HepG2 (cell line): ENCODE measurements at regions of chr6 and their contacts with region 1.

Region 1: GRCh38 chr6:52325695-52326441 is 36.1 kb upstream of the PAQR8 start:
- DNase-seq: peak; percentile 98
- ATAC-seq: peak; percentile 93
- H3K4me3 ChIP-seq: peak overlapping the region; percentile 10 to 48 (median 24)
- H3K27ac ChIP-seq: peak overlapping the region; percentile 93
- H3K4me1 ChIP-seq: peaks cover 72% of the 10 kb centered on the region
- H3K27me3 ChIP-seq: no peaks in the 10 kb centered on the region
- CTCF ChIP-seq: no peak
- EP300 ChIP-seq: peak; percentile 30 to 89; a peak in 2 of 4 replicates
- POLR2A ChIP-seq: peak; percentile 37 to 49; a peak in 3 of 4 replicates
- RAD21 ChIP-seq: peak; percentile 35

Region 2: DNA sequence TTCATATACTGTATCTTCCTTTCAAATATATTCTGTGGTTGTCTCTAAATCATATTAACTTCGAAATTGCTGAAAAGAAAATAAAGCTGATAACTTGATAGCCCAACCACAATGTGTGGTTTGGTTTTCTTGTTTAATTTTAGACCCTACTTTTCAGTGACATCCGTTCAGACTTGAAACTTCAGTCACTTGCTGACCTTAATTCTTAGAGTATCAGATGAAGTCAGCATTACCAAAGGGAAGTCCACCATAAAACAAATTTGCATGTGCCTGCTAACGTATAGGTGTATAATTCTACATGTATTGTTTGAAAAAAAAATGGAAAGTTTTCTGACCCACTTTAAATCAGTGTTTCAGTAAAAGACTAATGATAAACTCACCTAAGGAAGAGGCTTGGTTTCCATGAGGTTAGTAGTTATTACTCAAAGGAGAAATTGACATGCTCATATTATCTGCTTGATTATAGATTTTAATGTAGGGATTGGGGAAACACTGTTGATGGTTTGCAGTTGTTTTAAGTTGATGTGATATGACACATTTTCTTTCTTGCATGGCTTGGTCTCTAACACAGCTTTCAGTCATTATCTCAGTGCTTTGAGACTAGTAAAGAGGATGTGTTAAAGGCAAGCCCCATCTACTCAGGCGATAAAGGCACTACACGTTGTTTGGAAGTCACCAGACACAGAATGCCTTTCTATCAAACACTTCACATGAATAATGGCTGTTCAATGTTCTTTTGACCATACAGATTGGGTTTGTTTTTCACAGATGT is 144.9 kb before region 1 on chr6:
- CTCF ChIA-PET with region 1: no interaction called
- POLR2A ChIA-PET with region 1: no interaction called
- in situ Hi-C with region 1: no loop called
- intact Hi-C with region 1: no loop called
- DNase-seq: no peak
- ATAC-seq: no peak
- H3K4me3 ChIP-seq: no peak overlapping the region
- H3K27ac ChIP-seq: no peak overlapping the region
- H3K4me1 ChIP-seq: no peaks in the 10 kb centered on the region
- H3K27me3 ChIP-seq: no peaks in the 10 kb centered on the region
- CTCF ChIP-seq: no peak
- EP300 ChIP-seq: no peak
- POLR2A ChIP-seq: no peak
- RAD21 ChIP-seq: no peak

Region 3: GRCh38 chr6:52271852-52272460 is 53.9 kb before region 1 on chr6:
- CTCF ChIA-PET with region 1: no interaction called
- POLR2A ChIA-PET with region 1: no interaction called
- in situ Hi-C with region 1: no loop called
- intact Hi-C with region 1: no loop called
- DNase-seq: peak; percentile 43
- ATAC-seq: peak; percentile 13; the same call in 2 of the 3 replicates
- H3K4me3 ChIP-seq: no peak overlapping the region
- H3K27ac ChIP-seq: no peak overlapping the region
- H3K4me1 ChIP-seq: peaks cover 20% of the 10 kb centered on the region
- H3K27me3 ChIP-seq: no peaks in the 10 kb centered on the region
- CTCF ChIP-seq: no peak
- EP300 ChIP-seq: peak in 1 of 2 experiments; percentile 57; a peak in 1 of 4 replicates
- POLR2A ChIP-seq: no peak
- RAD21 ChIP-seq: no peak

Region 4: GRCh38 chr6:52304983-52305390 is 20.9 kb before region 1 on chr6:
- CTCF ChIA-PET with region 1: no interaction called
- POLR2A ChIA-PET with region 1: interaction called, 16 read pairs
- in situ Hi-C with region 1: no loop called
- intact Hi-C with region 1: loop called (anchors 2 kb)
- DNase-seq: no peak
- ATAC-seq: no peak
- H3K4me3 ChIP-seq: no peak overlapping the region
- H3K27ac ChIP-seq: peak overlapping the region; percentile 82
- H3K4me1 ChIP-seq: peaks cover 71% of the 10 kb centered on the region
- H3K27me3 ChIP-seq: no peaks in the 10 kb centered on the region
- CTCF ChIP-seq: no peak
- EP300 ChIP-seq: no peak
- POLR2A ChIP-seq: no peak
- RAD21 ChIP-seq: no peak

Region 5: GRCh38 chr6:52337633-52338290 is 11.9 kb after region 1 on chr6:
- CTCF ChIA-PET with region 1: no interaction called
- POLR2A ChIA-PET with region 1: interaction called, 10 read pairs
- in situ Hi-C with region 1: no loop called
- intact Hi-C with region 1: no loop called
- DNase-seq: no peak
- ATAC-seq: no peak
- H3K4me3 ChIP-seq: no peak overlapping the region
- H3K27ac ChIP-seq: no peak overlapping the region
- H3K4me1 ChIP-seq: peaks cover 45% of the 10 kb centered on the region
- H3K27me3 ChIP-seq: no peaks in the 10 kb centered on the region
- CTCF ChIP-seq: no peak
- EP300 ChIP-seq: no peak
- POLR2A ChIP-seq: no peak
- RAD21 ChIP-seq: no peak

Region 6: DNA sequence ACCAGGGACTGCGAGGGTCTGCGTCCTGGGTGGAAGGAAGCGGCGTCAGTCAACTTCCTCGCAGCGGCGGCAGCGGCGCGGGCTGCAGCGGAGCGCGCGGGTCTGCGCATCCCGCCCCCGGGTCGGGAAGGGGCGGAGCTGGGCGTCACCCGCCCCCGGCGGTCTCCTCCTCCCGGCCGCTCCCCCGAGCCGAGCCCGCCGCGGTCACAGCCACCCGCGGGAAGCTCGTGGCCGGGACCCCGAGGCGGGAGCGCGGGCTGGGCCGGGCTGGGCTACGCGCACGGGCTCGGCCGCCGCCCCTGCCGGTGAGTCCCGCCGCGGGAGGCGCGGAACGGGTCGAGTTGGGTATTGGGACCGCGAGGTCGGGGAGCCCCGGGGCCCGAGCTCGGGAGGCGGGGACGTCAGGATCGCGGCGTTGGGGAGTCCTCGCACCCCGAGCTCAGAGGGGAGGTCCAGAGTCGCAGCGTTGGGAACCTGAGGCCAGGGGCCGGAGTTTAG is 36.1 kb after region 1 on chr6 and contains the start of gene PAQR8:
- CTCF ChIA-PET with region 1: no interaction called
- POLR2A ChIA-PET with region 1: interaction called, 22 read pairs
- in situ Hi-C with region 1: no loop called
- intact Hi-C with region 1: no loop called
- DNase-seq: no peak
- ATAC-seq: peak; percentile 89
- H3K4me3 ChIP-seq: peak within 1 kb of the TSS; percentile 79 to 100 (median 95)
- H3K27ac ChIP-seq: peak within 1 kb of the TSS; percentile 60
- H3K4me1 ChIP-seq: peaks cover 62% of the 10 kb centered on the region
- H3K27me3 ChIP-seq: no peaks in the 10 kb centered on the region; a peak in 1 of 5 replicates
- CTCF ChIP-seq: no peak
- EP300 ChIP-seq: no peak; a peak in 1 of 4 replicates
- POLR2A ChIP-seq: peak in 1 of 2 experiments; percentile 73; a peak in 2 of 4 replicates
- RAD21 ChIP-seq: peak; percentile 69
- total RNA-seq, gene PAQR8: 26.2 and 37.7 TPM in 2 replicates

Region 7: DNA sequence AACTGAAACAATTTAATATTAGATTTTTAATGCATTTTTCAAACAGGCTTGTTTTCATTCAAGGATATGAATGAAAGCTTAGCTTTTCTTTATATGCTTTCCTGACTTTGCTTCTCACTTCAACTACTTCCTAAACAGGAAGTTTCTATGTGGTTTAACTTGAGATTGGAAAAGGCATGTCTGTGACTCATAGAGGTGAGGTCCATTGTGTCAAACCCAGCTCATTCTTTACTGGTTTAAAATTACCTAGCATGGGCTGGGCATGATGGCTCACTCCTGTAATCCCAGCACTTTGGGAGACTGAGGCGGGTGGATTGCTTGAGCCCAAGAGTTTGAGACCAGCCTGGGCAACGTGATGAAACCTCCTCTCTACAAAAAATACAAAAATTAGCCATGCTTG is 128.7 kb after region 1 on chr6:
- CTCF ChIA-PET with region 1: no interaction called
- POLR2A ChIA-PET with region 1: no interaction called
- in situ Hi-C with region 1: no loop called
- intact Hi-C with region 1: no loop called
- DNase-seq: peak; percentile 6
- ATAC-seq: no peak
- H3K4me3 ChIP-seq: no peak overlapping the region
- H3K27ac ChIP-seq: no peak overlapping the region
- H3K4me1 ChIP-seq: no peaks in the 10 kb centered on the region; the same call in 1 of the 2 replicates
- H3K27me3 ChIP-seq: no peaks in the 10 kb centered on the region
- CTCF ChIP-seq: no peak
- EP300 ChIP-seq: no peak
- POLR2A ChIP-seq: no peak
- RAD21 ChIP-seq: no peak

Region 8: DNA sequence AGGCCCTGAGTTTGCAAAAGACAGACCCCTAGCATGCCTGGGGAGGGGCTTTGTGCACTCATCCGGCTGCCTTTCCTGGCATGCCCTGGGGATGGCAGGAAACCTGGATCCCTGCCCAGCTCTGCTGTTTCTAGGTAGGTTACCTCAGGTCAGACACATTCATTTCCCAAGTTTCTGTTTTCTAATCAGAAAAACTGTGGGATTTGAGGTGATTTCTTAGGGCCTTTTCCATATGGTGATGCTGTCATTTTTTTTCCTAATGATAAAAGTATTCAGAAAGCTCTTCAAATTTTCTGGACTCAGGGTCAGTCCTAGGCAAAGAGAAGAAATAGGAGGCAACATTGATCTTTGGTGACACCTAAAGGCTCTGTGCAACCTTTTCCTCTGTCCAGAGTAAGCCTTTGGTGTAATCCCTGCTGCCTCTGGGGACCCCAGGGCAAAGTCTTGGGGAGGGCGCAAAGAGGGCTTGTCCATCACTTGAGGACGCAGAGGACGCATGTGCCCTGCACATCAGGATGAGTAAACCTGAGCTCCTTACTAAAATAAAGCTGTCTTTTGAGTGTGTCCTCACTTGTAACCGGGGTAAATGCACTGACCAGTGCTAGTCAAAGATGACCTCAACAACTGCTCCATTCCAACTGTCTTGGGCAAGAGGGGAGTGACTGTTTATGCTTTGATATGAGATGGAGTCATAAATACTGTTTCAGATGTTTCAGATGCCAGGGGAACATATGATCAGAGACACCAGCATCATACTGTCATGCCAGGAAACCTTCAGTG is 264.5 kb after region 1 on chr6:
- CTCF ChIA-PET with region 1: no interaction called
- POLR2A ChIA-PET with region 1: no interaction called
- in situ Hi-C with region 1: no loop called
- intact Hi-C with region 1: loop called (anchors 1 kb)
- DNase-seq: peak; percentile 77
- ATAC-seq: peak; percentile 62
- H3K4me3 ChIP-seq: peak overlapping the region in 1 of 3 experiments; percentile 33; a peak in 2 of 6 replicates
- H3K27ac ChIP-seq: peak overlapping the region; percentile 93
- H3K4me1 ChIP-seq: peaks cover 71% of the 10 kb centered on the region
- H3K27me3 ChIP-seq: no peaks in the 10 kb centered on the region
- CTCF ChIP-seq: peak; percentile 86
- EP300 ChIP-seq: peak in 1 of 2 experiments; percentile 29; a peak in 2 of 4 replicates
- POLR2A ChIP-seq: no peak
- RAD21 ChIP-seq: peak; percentile 78